ENCODE measurements at regions of chr16 and their contacts with region 1.

Region 1: GRCh38 chr16:57519796-57520360 is 16.5 kb downstream of the CCDC102A start:
- DNase-seq: peak; percentile 89
- ATAC-seq: peak; percentile 88
- H3K4me3 ChIP-seq: no peak overlapping the region
- H3K27ac ChIP-seq: no peak overlapping the region
- H3K4me1 ChIP-seq: peaks cover 11% of the 10 kb centered on the region
- H3K27me3 ChIP-seq: no peaks in the 10 kb centered on the region
- CTCF ChIP-seq: peak; percentile 98

Region 2: DNA sequence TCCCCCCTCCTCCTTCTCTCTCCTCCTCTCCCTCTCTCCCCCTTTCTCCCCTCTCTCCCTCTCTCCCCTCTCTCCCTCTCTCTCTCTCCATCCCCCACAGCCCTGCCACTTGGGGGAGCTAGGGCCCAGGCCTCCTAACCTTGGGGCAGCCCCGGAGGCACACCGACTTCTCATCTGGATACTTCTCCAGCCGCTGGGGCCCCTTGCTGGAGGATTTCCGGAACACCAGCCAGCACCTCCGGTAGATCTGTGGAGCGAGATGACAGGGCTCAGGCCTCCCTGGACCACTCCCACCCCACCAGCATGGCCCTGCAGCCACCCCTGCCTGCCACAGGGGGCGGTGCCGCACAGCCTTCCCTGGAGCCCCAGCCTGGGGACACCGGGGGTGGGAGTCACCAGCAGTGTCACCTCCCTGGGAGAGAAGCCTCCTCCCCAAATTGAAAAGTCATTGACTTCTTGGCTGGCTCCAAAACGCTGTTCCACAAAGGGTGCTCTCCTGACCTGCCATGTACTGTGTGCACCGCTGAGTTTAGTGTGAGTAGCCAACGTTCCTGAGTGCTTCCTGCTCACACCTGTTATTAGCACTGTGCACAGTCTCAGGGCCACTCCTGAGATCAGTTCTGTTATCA is 44.1 kb before region 1 on chr16:
- intact Hi-C with region 1: loop called (anchors 5 kb)
- DNase-seq: peak; percentile 81
- ATAC-seq: peak; percentile 62
- H3K4me3 ChIP-seq: no peak overlapping the region
- H3K27ac ChIP-seq: peak overlapping the region; percentile 26
- H3K4me1 ChIP-seq: peaks cover 60% of the 10 kb centered on the region
- H3K27me3 ChIP-seq: no peaks in the 10 kb centered on the region
- CTCF ChIP-seq: peak; percentile 65

Measured in upper lobe of right lung (tissue), 1 donor.